WTC11 (cell line): ENCODE measurements at regions of chr10 and their contacts with region 1.

Region 1: GRCh38 chr10:101291331-101292193 is 62.3 kb upstream of the LBX1 start:
- DNase-seq: peak; percentile 87
- ATAC-seq: peak; percentile 65
- H3K4me3 Mint-ChIP-seq: peak overlapping the region; percentile 80
- H3K27ac Mint-ChIP-seq: no peak overlapping the region
- H3K4me1 Mint-ChIP-seq: peaks cover 39% of the 10 kb centered on the region
- H3K27me3 Mint-ChIP-seq: peaks cover 97% of the 10 kb centered on the region
- CTCF ChIP-seq: peak; percentile 80

Region 2: GRCh38 chr10:101238732-101239105 is 52.8 kb before region 1 on chr10:
- CTCF ChIA-PET with region 1: interaction called, 45 read pairs
- POLR2A ChIA-PET with region 1: no interaction called
- DNase-seq: peak; percentile 55
- ATAC-seq: peak; percentile 50
- H3K4me3 Mint-ChIP-seq: no peak overlapping the region
- H3K27ac Mint-ChIP-seq: no peak overlapping the region
- H3K4me1 Mint-ChIP-seq: peaks cover 25% of the 10 kb centered on the region
- H3K27me3 Mint-ChIP-seq: peaks cover 86% of the 10 kb centered on the region
- CTCF ChIP-seq: no peak

Region 3: GRCh38 chr10:101272229-101272868 is 19.2 kb before region 1 on chr10:
- CTCF ChIA-PET with region 1: interaction called, 101 read pairs
- POLR2A ChIA-PET with region 1: interaction called, 3 read pairs
- DNase-seq: peak; percentile 84
- ATAC-seq: peak; percentile 97
- H3K4me3 Mint-ChIP-seq: no peak overlapping the region
- H3K27ac Mint-ChIP-seq: no peak overlapping the region
- H3K4me1 Mint-ChIP-seq: peaks cover 14% of the 10 kb centered on the region
- H3K27me3 Mint-ChIP-seq: peaks cover 15% of the 10 kb centered on the region
- CTCF ChIP-seq: peak; percentile 68

Region 4: GRCh38 chr10:101323495-101323894 is 31.9 kb after region 1 on chr10:
- CTCF ChIA-PET with region 1: interaction called, 11 read pairs
- POLR2A ChIA-PET with region 1: no interaction called
- DNase-seq: peak; percentile 18
- ATAC-seq: peak; percentile 75
- H3K4me3 Mint-ChIP-seq: no peak overlapping the region
- H3K27ac Mint-ChIP-seq: no peak overlapping the region
- H3K4me1 Mint-ChIP-seq: peaks cover 21% of the 10 kb centered on the region
- H3K27me3 Mint-ChIP-seq: peaks cover 6% of the 10 kb centered on the region; the same call in 1 of the 2 replicates
- CTCF ChIP-seq: no peak